ENCODE measurements at regions of chr4 and their contacts with region 1.

Region 1: GRCh38 chr4:78551479-78552351 is at the start of gene ANXA3:
- DNase-seq: peak; percentile 88
- total RNA-seq, gene ANXA3: 12.3 TPM

Region 2: DNA sequence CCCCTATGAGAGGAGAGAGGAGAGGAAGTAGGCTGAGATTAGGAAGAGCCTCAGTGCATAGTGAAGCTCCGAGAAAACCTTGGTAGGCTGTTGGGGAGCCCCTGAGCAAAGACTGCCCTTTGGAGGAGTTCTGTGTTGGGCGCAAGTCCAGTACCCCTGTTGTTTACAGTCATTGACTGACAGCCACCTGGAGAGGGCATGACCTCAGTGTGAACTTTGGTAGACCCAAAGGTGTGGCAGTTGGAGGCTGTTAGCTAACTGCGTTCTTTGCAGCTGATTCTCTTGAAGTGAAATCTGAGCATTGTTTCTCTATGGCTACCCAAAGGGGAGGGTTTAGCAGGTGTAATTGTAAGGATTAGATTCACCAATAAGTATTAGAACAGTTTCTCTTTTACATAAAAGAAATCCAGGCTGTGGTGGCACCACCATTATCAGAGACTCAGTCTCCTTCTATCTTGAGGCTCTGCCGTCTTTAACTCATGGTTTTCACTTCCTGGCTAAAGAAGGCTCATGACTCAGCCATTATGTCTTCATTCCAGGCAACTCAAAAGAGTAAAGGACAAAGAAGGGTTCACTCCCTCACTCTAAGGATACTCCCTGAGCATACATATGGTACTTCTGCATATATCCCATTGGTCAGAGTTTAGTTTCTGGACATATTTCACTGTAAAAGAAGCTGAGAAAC is 33.3 kb after region 1 on chr4:
- intact Hi-C with region 1: loop called (anchors 5 kb)
- DNase-seq: no peak

Region 3: DNA sequence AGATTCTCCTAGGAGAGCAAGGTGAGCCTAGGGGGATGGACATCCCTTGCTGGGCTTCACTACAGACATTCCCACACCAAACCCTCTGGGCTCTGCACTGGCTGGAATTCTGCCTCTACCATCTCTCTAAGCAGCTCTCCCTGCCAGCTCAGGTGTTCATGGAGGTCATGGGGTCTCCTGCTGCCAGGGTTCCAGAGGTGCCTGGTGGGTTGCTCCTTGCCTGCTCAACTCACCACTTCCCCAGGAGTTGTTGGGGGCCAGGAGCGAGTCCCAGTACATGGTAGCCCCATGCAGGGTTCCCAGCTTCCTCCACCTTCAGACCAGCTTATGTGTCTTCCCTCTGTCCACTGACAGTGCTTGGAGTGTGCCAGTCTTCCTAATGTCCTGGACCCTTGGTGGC is 555.3 kb after region 1 on chr4:
- intact Hi-C with region 1: no loop called
- DNase-seq: no peak